ENCODE measurements at regions of chr1 and their contacts with region 1.

Region 1: GRCh38 chr1:101438359-101438758 is 201.5 kb downstream of the S1PR1 start:
- DNase-seq: no peak
- ATAC-seq: peak; percentile 73
- H3K4me3 ChIP-seq: no peak overlapping the region
- H3K27ac ChIP-seq: peak overlapping the region; percentile 90
- H3K4me1 ChIP-seq: peaks cover 46% of the 10 kb centered on the region
- H3K27me3 ChIP-seq: no peaks in the 10 kb centered on the region
- CTCF ChIP-seq: peak; percentile 67 to 86 (median 74)
- EP300 ChIP-seq: no peak
- POLR2A ChIP-seq: no peak
- RAD21 ChIP-seq: peak; percentile 97

Region 2: GRCh38 chr1:100921109-100921706 is 517.2 kb before region 1 on chr1:
- CTCF ChIA-PET with region 1: interaction called, 9 read pairs
- POLR2A ChIA-PET with region 1: no interaction called
- RAD21 ChIA-PET with region 1: interaction called, 7 read pairs
- SMC1A ChIA-PET with region 1: interaction called, 29 read pairs
- in situ Hi-C with region 1: loop called (anchors 10 kb)
- intact Hi-C with region 1: loop called (anchors 2 kb)
- DNase-seq: no peak
- ATAC-seq: peak; percentile 59
- H3K4me3 ChIP-seq: no peak overlapping the region
- H3K27ac ChIP-seq: no peak overlapping the region
- H3K4me1 ChIP-seq: no peaks in the 10 kb centered on the region
- H3K27me3 ChIP-seq: no peaks in the 10 kb centered on the region
- CTCF ChIP-seq: peak; percentile 39 to 63 (median 39); a peak in 5 of 6 replicates
- EP300 ChIP-seq: no peak
- POLR2A ChIP-seq: no peak
- RAD21 ChIP-seq: peak; percentile 70

Region 3: GRCh38 chr1:101238681-101239094 is 199.7 kb before region 1 on chr1:
- CTCF ChIA-PET with region 1: interaction called, 16 read pairs
- POLR2A ChIA-PET with region 1: no interaction called
- RAD21 ChIA-PET with region 1: interaction called, 11 read pairs
- SMC1A ChIA-PET with region 1: interaction called, 15 read pairs
- in situ Hi-C with region 1: no loop called
- intact Hi-C with region 1: loop called (anchors 5 kb)
- DNase-seq: no peak
- ATAC-seq: peak; percentile 70
- H3K4me3 ChIP-seq: peak overlapping the region; percentile 81
- H3K27ac ChIP-seq: peak overlapping the region; percentile 43
- H3K4me1 ChIP-seq: peaks cover 32% of the 10 kb centered on the region
- H3K27me3 ChIP-seq: no peaks in the 10 kb centered on the region
- CTCF ChIP-seq: peak; percentile 90 to 99 (median 97)
- EP300 ChIP-seq: no peak
- POLR2A ChIP-seq: 0 out of 2 replicates have a peak, but pooled peaks have one; percentile 9
- RAD21 ChIP-seq: peak; percentile 89

Region 4: DNA sequence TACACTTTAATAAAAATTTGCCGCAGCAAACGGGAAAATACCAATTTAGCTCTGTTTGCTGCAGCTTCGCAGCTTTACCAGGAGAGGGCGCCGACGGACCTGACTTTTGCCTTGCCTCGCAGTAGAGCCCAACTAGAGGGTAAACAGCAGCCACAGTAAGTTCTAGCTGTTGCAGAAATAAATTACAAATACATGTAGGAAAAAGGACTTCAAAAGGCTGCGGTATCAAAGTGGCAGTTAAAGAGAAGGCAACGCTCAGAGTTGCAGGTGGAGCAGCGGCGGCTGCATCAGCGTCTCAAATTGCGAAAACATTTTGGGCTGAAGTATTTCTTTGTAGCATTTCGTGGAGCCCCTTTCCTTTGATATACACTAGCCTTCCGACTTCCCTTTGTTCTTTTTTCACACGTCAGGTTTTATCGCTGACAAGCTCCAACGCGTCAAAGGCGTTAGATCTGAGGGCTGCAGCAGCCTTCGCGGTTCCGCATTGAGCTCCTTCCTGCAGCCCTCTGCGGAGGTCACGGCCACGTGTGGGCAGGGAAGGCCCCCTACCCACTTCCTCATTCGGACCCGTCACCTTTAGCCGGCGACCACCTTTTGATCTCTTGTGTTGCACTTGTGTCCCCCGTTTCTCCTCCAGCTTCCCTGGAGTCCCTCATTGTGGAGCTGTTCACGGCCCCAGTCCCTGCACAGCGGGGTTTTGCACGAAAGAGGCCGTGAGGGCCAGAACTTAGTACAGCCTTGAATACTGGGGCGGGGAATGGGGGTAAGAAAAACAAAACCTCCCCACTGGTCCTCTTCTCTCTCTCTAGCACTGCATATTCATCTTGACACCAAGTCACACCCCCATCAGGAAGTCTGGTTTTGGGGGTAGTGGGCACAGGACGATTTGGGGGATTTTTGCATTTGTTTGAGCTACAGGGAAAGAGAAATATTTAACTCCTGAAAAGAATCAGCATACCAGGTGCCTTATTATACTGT is 128.7 kb before region 1 on chr1:
- CTCF ChIA-PET with region 1: interaction called, 228 read pairs
- POLR2A ChIA-PET with region 1: interaction called, 40 read pairs
- RAD21 ChIA-PET with region 1: interaction called, 279 read pairs
- SMC1A ChIA-PET with region 1: interaction called, 176 read pairs
- in situ Hi-C with region 1: loop called (anchors 5 kb)
- intact Hi-C with region 1: loop called (anchors 1 kb)
- DNase-seq: no peak
- ATAC-seq: peak; percentile 79
- H3K4me3 ChIP-seq: peak overlapping the region; percentile 50
- H3K27ac ChIP-seq: peak overlapping the region; percentile 93
- H3K4me1 ChIP-seq: peaks cover 56% of the 10 kb centered on the region
- H3K27me3 ChIP-seq: no peaks in the 10 kb centered on the region
- CTCF ChIP-seq: peak; percentile 88 to 93 (median 92)
- EP300 ChIP-seq: peak; percentile 70 to 88; a peak in 3 of 4 replicates
- POLR2A ChIP-seq: peak; percentile 82
- RAD21 ChIP-seq: peak; percentile 88

Region 5: GRCh38 chr1:101371259-101371658 is 67.1 kb before region 1 on chr1:
- CTCF ChIA-PET with region 1: interaction called, 25 read pairs
- POLR2A ChIA-PET with region 1: interaction called, 12 read pairs
- RAD21 ChIA-PET with region 1: interaction called, 18 read pairs
- SMC1A ChIA-PET with region 1: interaction called, 42 read pairs
- in situ Hi-C with region 1: no loop called
- intact Hi-C with region 1: loop called (anchors 2 kb)
- DNase-seq: peak; percentile 96
- ATAC-seq: peak; percentile 92
- H3K4me3 ChIP-seq: peak overlapping the region; percentile 53
- H3K27ac ChIP-seq: peak overlapping the region; percentile 90
- H3K4me1 ChIP-seq: peaks cover 20% of the 10 kb centered on the region
- H3K27me3 ChIP-seq: no peaks in the 10 kb centered on the region
- CTCF ChIP-seq: no peak
- EP300 ChIP-seq: peak; percentile 70 to 83; a peak in 3 of 4 replicates
- POLR2A ChIP-seq: no peak; the same call in 1 of the 2 replicates
- RAD21 ChIP-seq: peak; percentile 26

Region 6: GRCh38 chr1:101394041-101394440 is 44.3 kb before region 1 on chr1:
- CTCF ChIA-PET with region 1: interaction called, 16 read pairs
- POLR2A ChIA-PET with region 1: interaction called, 5 read pairs
- RAD21 ChIA-PET with region 1: interaction called, 60 read pairs
- SMC1A ChIA-PET with region 1: interaction called, 37 read pairs
- in situ Hi-C with region 1: no loop called
- intact Hi-C with region 1: loop called (anchors 1 kb)
- DNase-seq: no peak
- ATAC-seq: no peak
- H3K4me3 ChIP-seq: no peak overlapping the region
- H3K27ac ChIP-seq: no peak overlapping the region
- H3K4me1 ChIP-seq: peaks cover 23% of the 10 kb centered on the region
- H3K27me3 ChIP-seq: no peaks in the 10 kb centered on the region
- CTCF ChIP-seq: no peak
- EP300 ChIP-seq: no peak
- POLR2A ChIP-seq: no peak
- RAD21 ChIP-seq: no peak

Region 7: GRCh38 chr1:101420406-101420805 is 18.0 kb before region 1 on chr1:
- CTCF ChIA-PET with region 1: interaction called, 12 read pairs
- POLR2A ChIA-PET with region 1: interaction called, 8 read pairs
- RAD21 ChIA-PET with region 1: interaction called, 8 read pairs
- SMC1A ChIA-PET with region 1: interaction called, 20 read pairs
- in situ Hi-C with region 1: no loop called
- intact Hi-C with region 1: no loop called
- DNase-seq: no peak
- ATAC-seq: peak; percentile 18; the same call in 1 of the 3 replicates
- H3K4me3 ChIP-seq: no peak overlapping the region
- H3K27ac ChIP-seq: no peak overlapping the region
- H3K4me1 ChIP-seq: no peaks in the 10 kb centered on the region
- H3K27me3 ChIP-seq: no peaks in the 10 kb centered on the region
- CTCF ChIP-seq: no peak
- EP300 ChIP-seq: no peak
- POLR2A ChIP-seq: no peak
- RAD21 ChIP-seq: no peak

Measured in GM12878 (cell line).